HEK293 (cell line): ENCODE measurements at regions of chr10 and their contacts with region 1.

Region 1: GRCh38 chr10:132023092-132023811 is 41.5 kb upstream of the BNIP3 start:
- H3K4me3 ChIP-seq: no peak overlapping the region
- H3K27ac ChIP-seq: no peak overlapping the region
- H3K4me1 ChIP-seq: no peaks in the 10 kb centered on the region
- CTCF ChIP-seq: peak; percentile 67

Region 2: GRCh38 chr10:131885391-131886161 is 137.7 kb before region 1 on chr10:
- CTCF ChIA-PET with region 1: interaction called, 27 read pairs
- POLR2A ChIA-PET with region 1: no interaction called
- H3K4me3 ChIP-seq: no peak overlapping the region
- H3K27ac ChIP-seq: no peak overlapping the region
- H3K4me1 ChIP-seq: no peaks in the 10 kb centered on the region
- CTCF ChIP-seq: peak; percentile 96

Region 3: GRCh38 chr10:131981429-131982184 is 41.6 kb before region 1 on chr10 and contains the start of gene BNIP3:
- CTCF ChIA-PET with region 1: interaction called, 10 read pairs
- POLR2A ChIA-PET with region 1: no interaction called
- H3K4me3 ChIP-seq: peak within 1 kb of the TSS; percentile 58
- H3K27ac ChIP-seq: peak within 1 kb of the TSS; percentile 60; the same call in 1 of the 2 replicates
- H3K4me1 ChIP-seq: no peaks in the 10 kb centered on the region
- CTCF ChIP-seq: peak; percentile 65

Region 4: GRCh38 chr10:132001238-132001972 is 21.8 kb before region 1 on chr10:
- CTCF ChIA-PET with region 1: interaction called, 10 read pairs
- POLR2A ChIA-PET with region 1: no interaction called
- H3K4me3 ChIP-seq: no peak overlapping the region
- H3K27ac ChIP-seq: no peak overlapping the region
- H3K4me1 ChIP-seq: no peaks in the 10 kb centered on the region
- CTCF ChIP-seq: 0 out of 2 replicates have a peak, but pooled peaks have one; percentile 15

Region 5: GRCh38 chr10:132011024-132011423 is 12.2 kb before region 1 on chr10:
- CTCF ChIA-PET with region 1: interaction called, 19 read pairs
- POLR2A ChIA-PET with region 1: no interaction called
- H3K4me3 ChIP-seq: no peak overlapping the region
- H3K27ac ChIP-seq: no peak overlapping the region
- H3K4me1 ChIP-seq: no peaks in the 10 kb centered on the region
- CTCF ChIP-seq: no peak